Right ventricle myocardium inferior (tissue), 1 donor: ENCODE measurements at regions of chr4 and their contacts with region 1.

Region 1: DNA sequence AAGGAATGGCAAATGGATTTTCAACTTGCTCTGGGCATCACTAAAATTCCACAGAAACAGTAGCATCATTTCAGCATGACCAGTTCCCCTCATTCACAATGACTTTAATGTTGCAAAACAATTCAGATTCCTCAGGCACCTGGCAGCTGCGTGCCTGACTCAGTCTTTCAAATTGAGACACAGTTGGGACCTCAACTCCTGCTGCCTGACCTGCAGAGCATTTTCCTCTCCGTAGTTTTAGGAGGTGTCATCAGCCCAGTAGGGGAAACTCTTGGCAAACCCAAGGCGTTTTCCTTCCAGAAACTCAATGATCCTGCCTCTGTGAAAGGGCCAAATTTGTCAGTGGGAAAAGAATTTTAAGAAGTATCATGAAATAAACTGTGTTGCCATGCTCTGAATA is 388.9 kb downstream of the SPRY1 start:
- DNase-seq: peak; percentile 69
- ATAC-seq: peak; percentile 82

Region 2: GRCh38 chr4:123826896-123827295 is 41.4 kb after region 1 on chr4:
- intact Hi-C with region 1: loop called (anchors 5 kb)
- DNase-seq: no peak
- ATAC-seq: no peak

Region 3: DNA sequence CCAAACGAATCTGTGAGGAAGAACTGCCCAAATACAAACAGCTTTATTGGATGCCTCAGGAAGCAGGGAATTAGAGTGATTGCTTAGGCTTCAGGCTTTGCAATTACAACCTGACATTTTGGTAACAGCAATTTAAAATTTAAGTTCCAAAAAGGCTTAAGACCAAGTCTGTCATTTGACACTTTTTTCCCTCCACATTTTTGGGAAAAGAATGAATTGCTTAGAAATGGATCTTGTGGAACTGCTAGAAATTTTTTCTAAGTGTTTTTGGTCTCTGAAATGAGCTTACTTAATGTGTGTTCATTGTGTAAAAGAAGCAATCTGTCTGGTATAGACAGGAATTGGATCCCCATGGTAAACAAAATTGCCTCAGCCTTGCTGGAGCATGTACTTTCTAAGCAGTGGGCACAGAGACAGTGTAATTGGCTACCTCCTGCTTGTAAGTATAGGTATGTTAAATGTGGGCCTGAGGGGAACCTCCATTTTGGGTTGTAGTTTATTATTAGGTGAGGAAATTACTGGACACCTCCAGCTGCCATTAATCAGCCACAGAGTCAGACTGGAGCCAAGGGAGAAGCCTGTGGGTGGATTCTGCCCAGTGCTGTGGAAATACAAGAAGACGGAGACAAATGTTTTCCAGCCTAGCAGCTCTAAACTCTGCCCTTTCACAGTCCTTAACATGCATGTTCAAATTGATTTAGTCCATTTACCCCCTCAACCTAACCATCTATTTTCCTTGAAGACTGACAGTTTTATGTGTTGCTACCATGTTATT is 83.9 kb after region 1 on chr4:
- intact Hi-C with region 1: no loop called
- DNase-seq: no peak
- ATAC-seq: peak; percentile 71